CD4-positive, alpha-beta memory T cell (primary cell): ENCODE measurements at regions of chrX and their contacts with region 1.

Region 1: DNA sequence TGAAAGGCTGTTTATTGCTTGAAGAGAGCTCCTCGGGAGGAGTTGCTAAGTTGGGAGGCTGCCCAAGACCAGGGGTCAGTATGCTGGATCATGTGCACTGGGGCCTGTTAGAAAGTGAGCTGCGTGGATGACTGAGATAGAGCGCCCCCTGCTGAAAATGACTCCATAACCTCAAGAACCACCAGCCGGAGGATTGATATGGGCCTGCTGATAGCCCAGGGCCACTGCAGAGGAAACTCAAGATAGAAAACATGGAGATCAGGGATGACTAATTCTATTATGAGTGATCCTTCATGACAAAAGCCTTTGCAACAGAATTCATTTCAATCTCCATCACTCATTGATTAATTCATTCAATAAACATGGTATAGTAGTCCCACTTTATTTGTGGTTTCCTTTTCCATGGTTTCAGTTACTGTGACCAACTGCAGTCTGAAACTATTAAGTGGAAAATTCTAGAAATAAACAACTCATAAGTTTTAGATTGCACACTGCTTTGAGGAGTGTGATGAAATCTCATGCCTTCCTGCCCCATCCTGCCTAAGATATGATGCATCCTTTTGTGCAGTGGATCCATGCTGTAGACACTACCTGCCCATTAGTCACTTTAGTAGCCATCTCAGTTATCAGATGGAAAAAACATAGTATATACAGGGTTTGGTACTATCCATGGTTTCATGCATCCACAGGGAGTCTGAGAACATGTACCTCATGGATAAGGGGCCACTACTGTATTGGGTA is 126.7 kb upstream of the MBNL3 start:
- DNase-seq: peak; percentile 33 to 42 (median 37)
- H3K4me3 ChIP-seq: no peak overlapping the region
- H3K4me3 Mint-ChIP-seq: no peak overlapping the region
- H3K27ac ChIP-seq: no peak overlapping the region
- H3K27ac Mint-ChIP-seq: no peak overlapping the region
- H3K4me1 ChIP-seq: no peaks in the 10 kb centered on the region
- H3K4me1 Mint-ChIP-seq: no peaks in the 10 kb centered on the region
- H3K27me3 ChIP-seq: no peaks in the 10 kb centered on the region
- H3K27me3 Mint-ChIP-seq: no peaks in the 10 kb centered on the region

Region 2: GRCh38 chrX:131830400-131831184 is 785.0 kb before region 1 on chrX:
- CTCF ChIA-PET with region 1: interaction called, 5 read pairs
- POLR2A ChIA-PET with region 1: no interaction called
- intact Hi-C with region 1: loop called (anchors 1 kb)
- DNase-seq: peak; percentile 48 to 76 (median 65)
- H3K4me3 ChIP-seq: peak overlapping the region in 1 of 2 donors; percentile 5
- H3K4me3 Mint-ChIP-seq: peak overlapping the region in 7 of 8 donors; percentile 1 to 79 (median 54)
- H3K27ac ChIP-seq: no peak overlapping the region
- H3K27ac Mint-ChIP-seq: peak overlapping the region; percentile 20 to 88 (median 42)
- H3K4me1 ChIP-seq: peaks cover 29% of the 10 kb centered on the region
- H3K4me1 Mint-ChIP-seq: peaks cover 8 to 35% (median 17%) of the 10 kb centered on the region in 4 donors
- H3K27me3 ChIP-seq: no peaks in the 10 kb centered on the region
- H3K27me3 Mint-ChIP-seq: no peaks in the 10 kb centered on the region

Region 3: GRCh38 chrX:131854581-131854980 is 761.0 kb before region 1 on chrX:
- CTCF ChIA-PET with region 1: interaction called, 10 read pairs
- POLR2A ChIA-PET with region 1: no interaction called
- intact Hi-C with region 1: no loop called
- DNase-seq: peak in 4 of 5 donors; percentile 26 to 33 (median 30)
- H3K4me3 ChIP-seq: no peak overlapping the region
- H3K4me3 Mint-ChIP-seq: no peak overlapping the region
- H3K27ac ChIP-seq: no peak overlapping the region
- H3K27ac Mint-ChIP-seq: no peak overlapping the region
- H3K4me1 ChIP-seq: no peaks in the 10 kb centered on the region
- H3K4me1 Mint-ChIP-seq: no peaks in the 10 kb centered on the region
- H3K27me3 ChIP-seq: no peaks in the 10 kb centered on the region
- H3K27me3 Mint-ChIP-seq: no peaks in the 10 kb centered on the region

Region 4: GRCh38 chrX:132226169-132226568 is 389.4 kb before region 1 on chrX:
- CTCF ChIA-PET with region 1: interaction called, 11 read pairs
- POLR2A ChIA-PET with region 1: no interaction called
- intact Hi-C with region 1: loop called (anchors 5 kb)
- DNase-seq: peak in 1 of 5 donors; percentile 9
- H3K4me3 ChIP-seq: no peak overlapping the region
- H3K4me3 Mint-ChIP-seq: no peak overlapping the region
- H3K27ac ChIP-seq: no peak overlapping the region
- H3K27ac Mint-ChIP-seq: no peak overlapping the region
- H3K4me1 ChIP-seq: no peaks in the 10 kb centered on the region
- H3K4me1 Mint-ChIP-seq: peaks cover under 1 to 6% (median 3%) of the 10 kb centered on the region in 4 donors
- H3K27me3 ChIP-seq: no peaks in the 10 kb centered on the region
- H3K27me3 Mint-ChIP-seq: no peaks in the 10 kb centered on the region

Region 5: DNA sequence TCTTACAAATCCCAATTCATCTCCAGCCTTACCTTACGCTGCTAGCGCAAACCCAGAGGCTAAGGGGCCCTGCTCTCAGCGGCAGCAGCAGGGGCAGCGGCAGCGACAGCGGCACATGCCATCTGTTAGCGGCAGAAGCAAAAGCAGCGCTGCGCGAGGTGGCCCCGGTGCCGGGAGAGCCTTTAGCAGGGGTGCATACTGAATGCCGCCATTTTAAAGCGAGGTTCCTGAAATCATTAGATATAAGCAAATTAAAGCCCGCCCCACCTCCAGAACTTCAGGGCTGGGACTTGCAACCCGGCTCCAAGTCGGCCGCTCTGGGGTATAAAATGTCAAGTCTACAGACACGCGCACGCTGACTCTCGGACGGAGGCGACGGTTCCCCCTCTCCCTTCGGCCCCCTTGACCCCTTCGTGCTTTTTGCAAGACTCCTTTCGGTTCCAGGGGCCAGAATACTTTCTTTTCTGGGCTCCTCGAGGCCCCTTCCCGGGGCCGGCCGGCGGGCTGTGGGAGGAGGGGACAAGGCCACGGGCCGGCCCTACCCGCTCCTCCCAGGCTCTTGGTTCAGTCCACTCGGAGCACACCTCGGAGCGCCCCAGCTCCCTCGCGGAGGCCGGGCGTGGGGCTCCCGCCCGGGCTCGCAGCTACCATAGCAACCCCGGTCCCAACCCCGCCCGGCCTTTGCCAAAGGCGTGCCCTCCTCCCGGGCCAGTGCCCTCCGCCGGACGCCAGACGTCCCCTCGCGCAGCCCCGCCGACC is 126.6 kb before region 1 on chrX and contains the start of gene MBNL3:
- CTCF ChIA-PET with region 1: interaction called, 7 read pairs
- POLR2A ChIA-PET with region 1: no interaction called
- intact Hi-C with region 1: loop called (anchors 1 kb)
- DNase-seq: peak; percentile 61 to 84 (median 73)
- H3K4me3 ChIP-seq: peak within 1 kb of the TSS in 1 of 2 donors; percentile 68
- H3K4me3 Mint-ChIP-seq: peak within 1 kb of the TSS; percentile 94 to 97 (median 96)
- H3K27ac ChIP-seq: peak within 1 kb of the TSS; percentile 71
- H3K27ac Mint-ChIP-seq: peak within 1 kb of the TSS; percentile 93 to 98 (median 95)
- H3K4me1 ChIP-seq: peaks cover 39% of the 10 kb centered on the region
- H3K4me1 Mint-ChIP-seq: peaks cover 28 to 55% (median 45%) of the 10 kb centered on the region in 4 donors
- H3K27me3 ChIP-seq: no peaks in the 10 kb centered on the region
- H3K27me3 Mint-ChIP-seq: no peaks in the 10 kb centered on the region
- total RNA-seq, gene MBNL3: 36.6 to 39.6 TPM